ENCODE measurements at regions of chr12 and their contacts with region 1.

Region 1: GRCh38 chr12:122356192-122356635 is 66.3 kb downstream of the CLIP1 start:
- DNase-seq: peak; percentile 74
- ATAC-seq: peak; percentile 87
- H3K4me3 Mint-ChIP-seq: no peak overlapping the region
- H3K27ac Mint-ChIP-seq: peak overlapping the region; percentile 36
- H3K4me1 Mint-ChIP-seq: peaks cover 18% of the 10 kb centered on the region
- H3K27me3 Mint-ChIP-seq: no peaks in the 10 kb centered on the region

Region 2: DNA sequence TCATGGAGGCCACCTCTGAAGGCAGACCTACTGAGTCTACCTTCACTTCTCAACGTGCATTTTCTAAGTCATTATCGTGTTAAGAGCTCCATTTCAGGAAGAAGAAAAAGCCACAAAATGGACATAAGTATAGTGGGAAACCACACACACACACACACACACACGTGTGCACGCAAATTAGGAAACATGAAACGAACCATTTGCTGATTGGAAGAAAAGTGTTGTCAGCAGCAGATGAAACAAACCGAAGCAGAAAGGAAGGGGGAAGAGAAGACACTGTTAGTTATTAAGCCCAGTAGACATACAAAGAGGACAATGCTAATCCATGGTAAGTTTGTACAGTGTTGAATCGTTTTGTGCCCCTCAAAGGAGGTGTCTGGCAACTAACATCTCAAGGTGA is 80.0 kb before region 1 on chr12:
- CTCF ChIA-PET with region 1: no interaction called
- DNase-seq: no peak
- ATAC-seq: no peak
- H3K4me3 Mint-ChIP-seq: no peak overlapping the region
- H3K27ac Mint-ChIP-seq: no peak overlapping the region
- H3K4me1 Mint-ChIP-seq: no peaks in the 10 kb centered on the region
- H3K27me3 Mint-ChIP-seq: no peaks in the 10 kb centered on the region

Region 3: DNA sequence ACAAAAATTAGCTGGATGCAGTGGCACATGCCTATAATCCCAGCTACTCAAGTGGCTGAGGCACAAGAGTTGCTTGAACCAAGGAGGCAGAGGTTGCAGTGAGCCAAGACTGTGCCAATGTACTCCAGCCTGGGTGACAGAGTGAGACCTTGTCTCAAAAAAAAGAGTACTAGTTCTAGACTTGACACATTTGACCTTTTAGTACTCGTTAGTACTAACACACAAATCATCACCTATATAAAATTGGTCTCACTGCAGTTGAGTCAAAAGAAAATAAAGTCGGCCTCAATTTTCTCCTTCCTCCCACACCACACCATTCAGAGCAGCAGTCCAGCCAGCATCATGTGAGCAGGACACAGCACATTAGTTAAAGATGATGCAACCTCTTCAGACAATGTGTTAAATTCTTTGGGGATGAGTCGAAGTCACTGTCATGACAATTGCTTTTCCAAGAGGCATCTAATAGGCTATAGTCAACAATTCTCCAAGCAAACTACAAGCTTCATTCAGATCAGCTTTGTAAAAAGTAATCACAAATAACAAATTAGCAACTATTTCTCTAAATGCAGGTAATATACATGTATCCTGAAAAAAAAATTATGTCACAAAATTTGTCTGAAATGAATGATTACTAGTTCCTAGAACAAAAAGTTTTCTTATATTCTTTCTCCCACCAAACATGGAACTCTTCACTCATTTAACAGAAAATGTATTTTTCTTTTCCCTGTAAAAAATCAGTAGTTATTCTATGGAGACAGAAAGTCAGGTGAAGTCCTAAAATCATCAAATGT is 10.7 kb after region 1 on chr12:
- CTCF ChIA-PET with region 1: interaction called, 14 read pairs
- DNase-seq: no peak
- ATAC-seq: no peak
- H3K4me3 Mint-ChIP-seq: no peak overlapping the region
- H3K27ac Mint-ChIP-seq: peak overlapping the region; percentile 53
- H3K4me1 Mint-ChIP-seq: peaks cover 24% of the 10 kb centered on the region
- H3K27me3 Mint-ChIP-seq: no peaks in the 10 kb centered on the region

Region 4: DNA sequence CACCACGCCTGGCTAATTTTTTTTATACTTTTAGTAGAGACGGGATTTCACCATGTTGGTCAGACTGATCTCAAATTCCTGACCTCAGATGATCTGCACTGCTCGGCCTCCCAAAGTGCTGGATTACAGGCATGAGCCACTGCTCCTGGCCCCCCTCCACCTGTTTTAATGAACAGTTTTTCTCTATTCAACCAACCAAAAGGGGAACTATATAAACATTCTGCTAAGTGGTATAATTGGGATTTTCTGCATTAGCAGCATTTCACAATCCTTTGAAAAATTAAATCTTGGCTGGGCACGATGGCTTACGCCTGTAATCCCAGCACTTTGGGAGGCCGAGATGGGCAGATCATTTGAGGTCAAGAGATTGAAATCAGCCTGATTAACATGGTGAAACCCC is 215.6 kb after region 1 on chr12:
- CTCF ChIA-PET with region 1: no interaction called
- DNase-seq: no peak
- ATAC-seq: no peak
- H3K4me3 Mint-ChIP-seq: no peak overlapping the region
- H3K27ac Mint-ChIP-seq: no peak overlapping the region
- H3K4me1 Mint-ChIP-seq: peaks cover 2% of the 10 kb centered on the region
- H3K27me3 Mint-ChIP-seq: no peaks in the 10 kb centered on the region

Measured in activated CD8-positive, alpha-beta memory T cell treated with anti-CD3 and anti-CD28 coated beads, Interleukin-2, amount 10 ng/mL, durations not matched to agents 7 days and 5 days (primary cell).